Activated CD8-positive, alpha-beta memory T cell treated with anti-CD3 and anti-CD28 coated beads, Interleukin-2, amount 10 ng/mL, durations not matched to agents 7 days and 5 days (primary cell): ENCODE measurements at regions of chr11 and their contacts with region 1.

Region 1: DNA sequence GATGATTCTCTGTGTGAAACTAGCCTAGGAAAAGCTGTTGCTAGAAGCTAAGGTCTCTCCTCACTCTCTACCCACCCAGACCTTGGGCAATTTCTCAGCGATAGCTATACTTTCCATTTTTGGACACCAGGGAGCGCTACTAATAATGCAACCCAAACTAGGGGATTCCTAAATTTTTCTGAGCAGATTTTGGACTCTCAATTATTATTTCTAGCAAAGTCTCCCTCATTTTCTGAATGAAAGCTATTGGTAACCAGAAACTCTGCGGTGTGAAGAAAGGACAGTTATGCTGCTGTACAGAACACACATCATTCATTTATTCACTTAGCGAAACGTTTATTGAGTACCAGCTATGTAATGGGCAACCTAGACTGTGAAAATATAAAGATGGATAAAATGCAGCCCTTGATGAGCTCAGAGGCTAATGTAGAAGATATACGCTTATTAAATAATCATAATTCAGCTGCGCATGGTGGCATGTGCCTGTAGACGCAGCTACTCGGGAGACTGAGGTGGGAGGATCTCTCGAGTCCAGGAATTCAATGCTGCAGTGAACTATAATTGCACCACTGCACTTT is 6.1 kb upstream of the STIM1 start:
- DNase-seq: peak; percentile 60
- ATAC-seq: peak; percentile 71
- H3K4me3 Mint-ChIP-seq: no peak overlapping the region
- H3K27ac Mint-ChIP-seq: no peak overlapping the region
- H3K4me1 Mint-ChIP-seq: peaks cover 31% of the 10 kb centered on the region
- H3K27me3 Mint-ChIP-seq: no peaks in the 10 kb centered on the region

Region 2: DNA sequence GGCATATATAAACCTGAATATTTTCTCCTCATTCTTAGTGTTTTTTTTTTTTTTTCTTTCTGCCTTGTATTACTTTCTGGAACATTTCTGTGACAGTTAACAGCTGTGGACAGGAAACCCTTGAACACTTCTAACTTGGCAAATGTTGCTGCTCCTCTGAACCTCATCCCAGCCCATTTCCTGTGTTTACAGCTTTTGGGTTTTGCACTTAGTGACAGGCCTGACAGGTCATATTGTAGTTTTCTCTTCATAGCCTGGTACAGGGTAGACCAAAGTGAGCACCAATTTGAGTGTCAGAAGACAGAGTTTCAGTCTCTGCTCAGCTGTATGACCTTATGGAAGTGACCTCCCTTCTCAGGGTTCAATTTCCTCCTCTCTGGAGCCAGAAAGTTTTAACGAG is 97.7 kb after region 1 on chr11:
- CTCF ChIA-PET with region 1: interaction called, 62 read pairs
- DNase-seq: peak; percentile 88
- ATAC-seq: peak; percentile 80
- H3K4me3 Mint-ChIP-seq: peak overlapping the region; percentile 70
- H3K27ac Mint-ChIP-seq: peak overlapping the region; percentile 98
- H3K4me1 Mint-ChIP-seq: peaks cover 94% of the 10 kb centered on the region
- H3K27me3 Mint-ChIP-seq: no peaks in the 10 kb centered on the region

Region 3: GRCh38 chr11:3984896-3985295 is 135.5 kb after region 1 on chr11:
- CTCF ChIA-PET with region 1: interaction called, 22 read pairs
- DNase-seq: peak; percentile 61
- ATAC-seq: peak; percentile 72
- H3K4me3 Mint-ChIP-seq: no peak overlapping the region
- H3K27ac Mint-ChIP-seq: no peak overlapping the region
- H3K4me1 Mint-ChIP-seq: peaks cover 50% of the 10 kb centered on the region
- H3K27me3 Mint-ChIP-seq: no peaks in the 10 kb centered on the region

Region 4: GRCh38 chr11:4087551-4087950 is 238.2 kb after region 1 on chr11:
- CTCF ChIA-PET with region 1: interaction called, 15 read pairs
- DNase-seq: no peak
- ATAC-seq: no peak
- H3K4me3 Mint-ChIP-seq: no peak overlapping the region
- H3K27ac Mint-ChIP-seq: no peak overlapping the region
- H3K4me1 Mint-ChIP-seq: peaks cover 50% of the 10 kb centered on the region
- H3K27me3 Mint-ChIP-seq: no peaks in the 10 kb centered on the region